Left lung (tissue), 14 donors: ENCODE measurements at regions of chr1 and their contacts with region 1.

Region 1: GRCh38 chr1:20633190-20634064 is at the start of gene PINK1:
- DNase-seq: peak; percentile 60 to 96 (median 80)
- ATAC-seq: peak; percentile 97
- H3K4me3 ChIP-seq: peak within 1 kb of the TSS; percentile 90 to 96
- H3K27ac ChIP-seq: peak within 1 kb of the TSS; percentile 85 to 97
- H3K4me1 ChIP-seq: peaks cover 0 to 15% of the 10 kb centered on the region in 2 donors
- H3K27me3 ChIP-seq: peaks cover 0 to 10% of the 10 kb centered on the region in 2 donors
- CTCF ChIP-seq: peak; percentile 98 to 99
- polyA plus RNA-seq, gene PINK1: 28.6 to 39.0 (median 33.8) TPM

Region 2: DNA sequence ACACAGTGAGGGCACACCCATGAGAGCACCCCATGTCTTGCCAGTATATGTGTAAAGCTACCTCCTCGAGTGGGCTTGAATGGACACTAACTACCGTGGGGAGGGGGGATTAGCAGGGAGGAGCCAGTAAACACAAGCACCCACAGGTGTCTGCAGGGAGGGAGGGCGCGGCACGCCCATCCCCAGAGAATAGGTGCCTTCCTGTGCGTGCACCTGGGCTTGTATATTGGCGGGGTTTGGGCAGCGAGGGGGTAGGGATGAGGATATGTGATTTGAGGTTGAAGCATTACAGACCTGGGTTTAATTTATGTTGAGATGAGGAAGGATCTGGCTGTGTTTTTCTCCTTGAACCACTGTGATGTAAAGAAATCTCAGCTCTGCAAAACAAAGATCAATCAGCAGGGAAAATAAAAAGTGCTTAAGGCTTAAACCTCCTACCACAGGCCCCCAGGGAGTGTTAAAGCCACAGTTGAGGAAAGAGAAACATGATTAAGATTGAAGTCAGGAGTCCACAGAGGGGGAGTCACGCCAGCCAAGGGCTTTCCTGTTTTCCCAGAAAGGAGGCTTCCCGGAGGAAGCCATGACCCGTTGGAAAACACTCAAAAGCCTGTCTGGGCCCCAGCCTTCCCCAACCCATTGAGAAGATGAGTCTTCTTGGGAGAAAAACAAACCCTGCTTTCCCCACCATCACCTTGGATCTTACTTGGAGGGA is 227.4 kb before region 1 on chr1:
- intact Hi-C with region 1: no loop called
- DNase-seq: no peak
- ATAC-seq: no peak
- H3K4me3 ChIP-seq: no peak overlapping the region
- H3K27ac ChIP-seq: no peak overlapping the region
- H3K4me1 ChIP-seq: no peaks in the 10 kb centered on the region
- H3K27me3 ChIP-seq: peaks cover 19 to 60% of the 10 kb centered on the region in 2 donors
- CTCF ChIP-seq: no peak

Region 3: DNA sequence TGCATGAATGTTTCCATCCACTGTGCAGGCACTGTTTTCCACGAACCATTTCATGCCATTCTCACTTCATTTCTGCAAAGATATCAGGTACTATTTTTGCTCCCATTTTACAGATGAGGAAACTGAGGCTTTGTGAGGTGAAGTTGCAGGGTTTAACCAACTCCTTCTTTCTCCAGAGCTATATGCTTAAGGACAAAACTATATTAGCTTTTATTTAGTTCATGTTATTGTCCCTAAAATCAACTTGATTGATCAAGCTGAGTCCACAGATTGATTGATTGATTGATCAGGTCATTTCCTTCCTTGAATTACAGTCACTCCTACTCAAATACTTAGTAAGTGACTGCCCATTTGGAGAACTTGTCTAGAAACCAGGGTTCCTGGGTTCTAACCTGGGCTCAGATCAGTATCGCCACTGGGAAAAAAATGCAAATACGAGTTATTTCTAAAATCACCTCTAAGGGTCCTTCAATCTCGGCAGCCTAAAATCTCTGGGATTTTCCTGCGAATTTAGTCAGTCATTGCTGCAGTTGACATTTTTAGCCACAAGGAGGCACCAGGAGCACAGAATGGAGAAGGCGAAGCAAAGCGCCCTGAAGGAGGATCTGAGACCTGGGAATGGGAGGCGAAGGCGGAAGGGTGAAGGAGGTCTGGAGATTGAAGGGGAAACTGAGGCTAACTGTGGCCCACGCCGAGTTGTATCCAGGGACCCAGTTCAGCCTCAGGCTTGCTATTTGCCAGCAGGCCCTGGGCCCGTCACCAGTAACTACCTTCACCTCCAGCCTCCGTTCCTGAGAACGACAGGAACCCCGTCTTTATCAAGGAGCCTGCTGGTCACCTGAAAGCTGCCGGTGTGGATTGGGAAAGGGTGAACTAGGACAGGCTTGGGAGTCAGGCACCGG is 111.2 kb before region 1 on chr1:
- intact Hi-C with region 1: loop called in 1 of 2 experiments (anchors 5 kb)
- DNase-seq: peak in 3 of 4 donors; percentile 61 to 87 (median 74)
- ATAC-seq: peak; percentile 95
- H3K4me3 ChIP-seq: no peak overlapping the region
- H3K27ac ChIP-seq: no peak overlapping the region
- H3K4me1 ChIP-seq: no peaks in the 10 kb centered on the region
- H3K27me3 ChIP-seq: peaks cover 0 to 36% of the 10 kb centered on the region in 2 donors
- CTCF ChIP-seq: peak; percentile 78 to 81

Region 4: GRCh38 chr1:20574686-20575540 is 58.5 kb before region 1 on chr1:
- intact Hi-C with region 1: loop called in 1 of 2 experiments (anchors 10 kb)
- DNase-seq: peak in 3 of 4 donors; percentile 57 to 96 (median 84)
- ATAC-seq: peak; percentile 97
- H3K4me3 ChIP-seq: no peak overlapping the region
- H3K27ac ChIP-seq: no peak overlapping the region
- H3K4me1 ChIP-seq: no peaks in the 10 kb centered on the region
- H3K27me3 ChIP-seq: peaks cover 0 to 33% of the 10 kb centered on the region in 2 donors
- CTCF ChIP-seq: peak; percentile 51 to 92

Region 5: GRCh38 chr1:20603527-20604464 is 29.6 kb before region 1 on chr1:
- intact Hi-C with region 1: no loop called
- DNase-seq: no peak
- ATAC-seq: peak; percentile 44
- H3K4me3 ChIP-seq: no peak overlapping the region
- H3K27ac ChIP-seq: peak overlapping the region in 1 of 2 donors; percentile 83
- H3K4me1 ChIP-seq: peaks cover 0 to 22% of the 10 kb centered on the region in 2 donors
- H3K27me3 ChIP-seq: no peaks in the 10 kb centered on the region
- CTCF ChIP-seq: no peak